K562 (cell line): ENCODE measurements at regions of chr10 and their contacts with region 1.

Region 1: GRCh38 chr10:96910488-96911395 is 78.6 kb downstream of the LCOR start:
- DNase-seq: peak; percentile 17 to 62 (median 30)
- ATAC-seq: peak; percentile 67; the same call in 2 of the 3 replicates
- H3K4me3 ChIP-seq: no peak overlapping the region
- H3K27ac ChIP-seq: no peak overlapping the region
- H3K4me1 ChIP-seq: no peaks in the 10 kb centered on the region
- H3K27me3 ChIP-seq: no peaks in the 10 kb centered on the region
- CTCF ChIP-seq: peak; percentile 40 to 58 (median 56); a peak in 4 of 6 replicates
- EP300 ChIP-seq: no peak
- POLR2A ChIP-seq: no peak
- RAD21 ChIP-seq: peak in 1 of 2 experiments; percentile 38; a peak in 2 of 4 replicates

Region 2: GRCh38 chr10:97025613-97026242 is 115.0 kb after region 1 on chr10:
- CTCF ChIA-PET with region 1: no interaction called
- POLR2A ChIA-PET with region 1: no interaction called
- in situ Hi-C with region 1: no loop called
- intact Hi-C with region 1: loop called (anchors 10 kb)
- DNase-seq: peak; percentile 52 to 65 (median 57)
- ATAC-seq: peak; percentile 94
- H3K4me3 ChIP-seq: no peak overlapping the region
- H3K27ac ChIP-seq: no peak overlapping the region
- H3K4me1 ChIP-seq: peaks cover 0 to 4% of the 10 kb centered on the region in 2 experiments; a peak in 2 of 5 replicates
- H3K27me3 ChIP-seq: peaks cover 9 to 29% of the 10 kb centered on the region in 2 experiments; a peak in 4 of 5 replicates
- CTCF ChIP-seq: peak; percentile 64 to 73 (median 73)
- EP300 ChIP-seq: no peak
- POLR2A ChIP-seq: no peak
- RAD21 ChIP-seq: peak in 1 of 2 experiments; percentile 63; a peak in 2 of 4 replicates